Adrenal gland (tissue), 19 donors: ENCODE measurements at regions of chr11 and their contacts with region 1.

Region 1: GRCh38 chr11:84564180-84564866 is 1062.8 kb downstream of the DLG2 start:
- DNase-seq: peak; percentile 19 to 78 (median 49)
- H3K4me3 ChIP-seq: no peak overlapping the region
- H3K27ac ChIP-seq: no peak overlapping the region
- H3K4me1 ChIP-seq: peaks cover 0 to 6% of the 10 kb centered on the region in 2 donors
- H3K27me3 ChIP-seq: no peaks in the 10 kb centered on the region
- CTCF ChIP-seq: peak; percentile 69 to 90 (median 78)
- POLR2A ChIP-seq: no peak

Region 2: DNA sequence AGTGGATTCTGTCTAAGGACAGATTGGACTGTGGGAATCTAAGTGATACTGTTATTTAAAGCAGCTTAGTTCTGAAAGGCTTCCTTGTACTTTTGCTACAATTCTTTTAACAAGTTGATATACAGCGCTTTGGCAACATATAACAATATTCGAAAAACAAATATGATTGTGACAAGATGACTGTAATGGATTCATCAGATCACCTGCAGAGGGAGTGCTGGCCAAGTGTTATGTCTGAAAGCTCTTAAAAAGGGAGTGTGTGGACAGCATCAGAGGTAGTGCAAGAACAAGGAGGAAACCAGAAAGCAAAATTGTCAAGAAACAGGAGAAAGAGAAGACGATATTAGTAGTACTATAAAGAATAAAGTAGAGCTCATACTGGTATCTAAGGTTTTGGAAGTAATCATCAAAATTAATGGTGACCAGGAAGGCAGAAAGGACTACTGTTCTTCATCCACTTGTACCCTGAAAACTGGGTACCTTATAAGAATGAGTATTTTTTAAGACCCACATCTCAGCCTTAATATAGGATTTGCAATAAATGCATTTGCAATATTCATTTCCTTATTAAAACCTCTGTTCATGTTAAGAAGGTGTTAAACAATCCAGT is 166.2 kb before region 1 on chr11:
- intact Hi-C with region 1: no loop called
- DNase-seq: peak in 6 of 7 donors; percentile 18 to 64 (median 24)
- H3K4me3 ChIP-seq: no peak overlapping the region
- H3K27ac ChIP-seq: no peak overlapping the region
- H3K4me1 ChIP-seq: no peaks in the 10 kb centered on the region
- H3K27me3 ChIP-seq: no peaks in the 10 kb centered on the region
- CTCF ChIP-seq: peak; percentile 16 to 57 (median 47)
- POLR2A ChIP-seq: no peak

Region 3: DNA sequence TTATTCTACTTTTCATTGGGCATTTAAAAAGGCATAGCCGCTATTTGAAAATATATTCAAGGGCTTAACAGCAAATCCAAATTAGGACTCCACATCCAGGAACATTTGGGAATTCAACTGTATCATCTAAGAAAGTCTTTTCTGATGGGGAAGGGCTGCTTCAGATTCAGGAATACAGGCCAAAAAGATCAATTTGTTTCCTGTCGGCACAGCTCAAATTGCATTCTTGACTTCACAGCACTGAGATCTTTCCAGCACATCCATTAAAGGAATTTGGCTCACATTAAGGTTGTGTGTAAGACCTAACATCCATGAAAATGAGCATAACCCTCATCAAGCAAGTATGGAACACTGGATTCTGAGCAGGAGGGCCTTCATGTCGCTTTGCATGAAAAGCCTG is 108.6 kb before region 1 on chr11:
- intact Hi-C with region 1: no loop called
- DNase-seq: no peak
- H3K4me3 ChIP-seq: no peak overlapping the region
- H3K27ac ChIP-seq: no peak overlapping the region
- H3K4me1 ChIP-seq: no peaks in the 10 kb centered on the region
- H3K27me3 ChIP-seq: no peaks in the 10 kb centered on the region
- CTCF ChIP-seq: no peak
- POLR2A ChIP-seq: no peak

Region 4: GRCh38 chr11:84673753-84674152 is 109.4 kb after region 1 on chr11:
- intact Hi-C with region 1: no loop called
- DNase-seq: peak in 1 of 7 donors; percentile 6
- H3K4me3 ChIP-seq: no peak overlapping the region
- H3K27ac ChIP-seq: no peak overlapping the region
- H3K4me1 ChIP-seq: no peaks in the 10 kb centered on the region
- H3K27me3 ChIP-seq: no peaks in the 10 kb centered on the region
- CTCF ChIP-seq: no peak
- POLR2A ChIP-seq: no peak

Region 5: GRCh38 chr11:84714316-84714780 is 150.0 kb after region 1 on chr11:
- intact Hi-C with region 1: loop called in 1 of 2 experiments (anchors 10 kb)
- DNase-seq: peak; percentile 40 to 73 (median 65)
- H3K4me3 ChIP-seq: no peak overlapping the region
- H3K27ac ChIP-seq: no peak overlapping the region
- H3K4me1 ChIP-seq: no peaks in the 10 kb centered on the region
- H3K27me3 ChIP-seq: no peaks in the 10 kb centered on the region
- CTCF ChIP-seq: peak in 4 of 6 experiments; percentile 28 to 46 (median 36)
- POLR2A ChIP-seq: no peak

Region 6: GRCh38 chr11:84906995-84907394 is 342.7 kb after region 1 on chr11:
- intact Hi-C with region 1: no loop called
- DNase-seq: no peak
- H3K4me3 ChIP-seq: no peak overlapping the region
- H3K27ac ChIP-seq: no peak overlapping the region
- H3K4me1 ChIP-seq: no peaks in the 10 kb centered on the region
- H3K27me3 ChIP-seq: no peaks in the 10 kb centered on the region
- CTCF ChIP-seq: no peak
- POLR2A ChIP-seq: no peak